Dendritic cell treated with granulocyte-macrophage colony-stimulating factor and Interleukin-4, amounts not matched to agents 40 ng/mL and 50 ng/mL, for 4 days (primary cell): ENCODE measurements at regions of chr21 and their contacts with region 1.

Region 1: GRCh38 chr21:33069976-33070811 is at the start of gene OLIG1:
- H3K4me3 Mint-ChIP-seq: peak within 1 kb of the TSS; percentile 79
- H3K27ac Mint-ChIP-seq: no peak within 1 kb of the TSS
- H3K4me1 Mint-ChIP-seq: peaks cover 54% of the 10 kb centered on the region
- H3K27me3 Mint-ChIP-seq: peaks cover 63% of the 10 kb centered on the region

Region 2: GRCh38 chr21:33025489-33026442 is 44.4 kb before region 1 on chr21 and contains the start of gene OLIG2:
- intact Hi-C with region 1: loop called (anchors 5 kb)
- H3K4me3 Mint-ChIP-seq: peak within 1 kb of the TSS; percentile 59
- H3K27ac Mint-ChIP-seq: peak within 1 kb of the TSS; percentile 37
- H3K4me1 Mint-ChIP-seq: peaks cover 64% of the 10 kb centered on the region
- H3K27me3 Mint-ChIP-seq: peaks cover 97% of the 10 kb centered on the region

Region 3: GRCh38 chr21:33089398-33090119 is 19.4 kb after region 1 on chr21:
- intact Hi-C with region 1: no loop called
- H3K4me3 Mint-ChIP-seq: no peak overlapping the region
- H3K27ac Mint-ChIP-seq: peak overlapping the region; percentile 52
- H3K4me1 Mint-ChIP-seq: peaks cover 25% of the 10 kb centered on the region
- H3K27me3 Mint-ChIP-seq: peaks cover 5% of the 10 kb centered on the region

Region 4: DNA sequence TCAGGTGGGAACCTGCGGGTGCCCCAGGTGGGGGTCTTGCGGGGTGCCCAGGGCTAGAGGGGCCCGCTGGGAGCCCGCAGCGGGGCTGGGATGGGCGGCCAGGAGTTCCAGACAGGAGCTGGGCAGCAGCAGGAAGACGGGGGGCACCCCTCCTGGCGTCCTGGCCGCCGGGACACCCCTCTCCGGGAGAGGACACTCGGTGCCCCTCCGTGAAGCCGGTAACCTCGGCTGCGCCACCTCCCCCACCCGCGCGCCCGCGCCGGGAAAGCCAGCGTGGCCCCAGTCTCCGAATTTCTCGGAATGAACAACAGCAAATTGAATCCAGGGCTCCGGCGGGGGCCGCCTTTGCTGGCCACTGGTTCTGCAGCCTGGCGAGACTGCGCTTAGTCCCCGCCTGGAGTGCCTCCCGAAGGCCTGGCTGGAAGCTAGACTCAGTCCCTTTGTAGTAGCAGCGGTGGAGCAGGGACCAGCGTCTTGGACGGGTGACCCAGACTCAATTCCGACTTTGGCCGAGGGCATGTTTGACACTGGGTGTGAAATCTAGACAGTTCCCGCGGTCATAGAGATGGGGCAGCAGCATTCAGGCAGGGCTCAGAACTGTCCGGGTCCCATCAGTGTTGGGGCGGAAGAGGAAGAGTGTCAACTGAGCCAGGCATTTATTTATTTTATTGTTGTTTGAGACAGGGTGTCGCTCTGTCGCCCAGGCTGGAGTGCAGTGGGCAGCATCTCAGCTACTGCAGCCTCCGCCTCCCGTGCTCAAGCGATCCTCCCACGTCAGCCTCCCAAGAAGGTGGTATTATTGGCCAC is 333.8 kb after region 1 on chr21:
- intact Hi-C with region 1: no loop called
- H3K4me3 Mint-ChIP-seq: peak overlapping the region; percentile 98
- H3K27ac Mint-ChIP-seq: peak overlapping the region; percentile 99
- H3K4me1 Mint-ChIP-seq: peaks cover 74% of the 10 kb centered on the region
- H3K27me3 Mint-ChIP-seq: no peaks in the 10 kb centered on the region

Region 5: DNA sequence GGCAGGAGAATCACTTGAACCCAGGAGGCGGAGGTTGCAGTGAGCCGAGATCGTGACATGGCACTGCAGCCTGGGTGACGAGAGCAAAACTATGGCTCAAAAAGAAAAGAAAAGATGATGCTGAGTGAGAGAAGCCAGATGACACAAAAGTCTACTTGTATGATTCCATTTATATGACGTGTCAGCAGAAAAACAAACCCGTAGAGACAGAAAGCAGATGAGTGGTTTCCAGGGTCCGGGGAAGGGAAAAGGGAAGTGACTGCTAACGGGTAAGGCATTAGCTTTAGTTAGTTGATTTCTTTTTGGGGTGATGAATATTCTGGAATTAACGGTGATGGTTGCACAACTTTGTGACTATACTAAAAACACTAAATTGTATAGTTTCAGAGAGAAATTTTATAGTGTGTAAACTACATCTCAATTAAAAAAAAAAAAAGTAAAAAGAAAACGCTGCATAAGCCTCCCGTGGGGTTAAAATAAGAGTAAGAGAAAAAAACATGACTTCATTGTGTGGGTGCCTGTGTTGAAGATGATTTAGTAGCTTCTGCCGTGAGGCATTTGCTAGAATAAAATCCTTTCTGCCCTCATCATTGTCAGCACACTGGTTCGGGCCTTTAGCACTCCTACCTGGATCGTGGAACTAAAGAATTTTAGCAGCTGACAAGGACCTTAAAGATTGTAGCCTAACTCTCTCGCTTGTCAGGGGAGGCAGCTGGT is 870.1 kb after region 1 on chr21:
- intact Hi-C with region 1: no loop called
- H3K4me3 Mint-ChIP-seq: no peak overlapping the region
- H3K27ac Mint-ChIP-seq: peak overlapping the region; percentile 64
- H3K4me1 Mint-ChIP-seq: peaks cover 54% of the 10 kb centered on the region
- H3K27me3 Mint-ChIP-seq: no peaks in the 10 kb centered on the region